A549 (cell line): ENCODE measurements at regions of chr7 and their contacts with region 1.

Region 1: GRCh38 chr7:2680792-2681490 is 7.1 kb upstream of the AMZ1 start:
- DNase-seq: peak; percentile 77 to 93
- ATAC-seq: peak; percentile 82 to 94
- H3K4me3 ChIP-seq: no peak overlapping the region
- H3K27ac ChIP-seq: no peak overlapping the region
- H3K4me1 ChIP-seq: no peaks in the 10 kb centered on the region
- CTCF ChIP-seq: peak; percentile 79
- EP300 ChIP-seq: no peak
- POLR2A ChIP-seq: no peak
- RAD21 ChIP-seq: peak; percentile 83 to 88

Region 2: DNA sequence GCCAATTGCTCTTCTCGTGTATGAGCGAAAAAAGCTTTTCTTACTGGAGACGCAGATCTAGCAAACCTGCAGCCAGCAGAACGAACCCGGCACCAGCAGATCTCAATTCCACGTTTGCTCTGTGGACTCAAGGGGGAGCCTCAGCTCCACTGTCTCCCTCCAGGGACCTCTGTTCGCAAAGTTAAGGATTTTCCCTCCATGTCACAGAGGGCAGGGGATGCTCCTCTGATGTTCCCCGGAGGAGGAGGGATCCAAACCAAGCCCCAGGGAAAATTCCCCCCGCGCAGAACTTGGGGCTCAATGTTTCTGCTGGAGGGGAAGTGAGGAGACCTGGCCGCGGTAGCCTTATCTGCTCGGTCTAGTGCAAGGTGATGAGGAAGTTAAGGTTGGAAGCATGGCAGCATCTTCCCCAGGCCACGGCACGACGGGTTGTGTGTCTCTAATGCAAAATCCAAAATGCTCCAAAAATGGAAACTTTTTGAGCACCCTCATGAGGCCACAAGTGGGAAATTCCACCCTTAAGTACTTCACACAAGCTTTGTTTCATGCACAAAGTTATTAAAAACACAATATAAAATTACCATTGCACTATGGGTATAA is 113.2 kb before region 1 on chr7:
- CTCF ChIA-PET with region 1: interaction called, 11 read pairs
- POLR2A ChIA-PET with region 1: no interaction called
- DNase-seq: no peak
- ATAC-seq: peak; percentile 45 to 78; a peak in 3 of 6 replicates
- H3K4me3 ChIP-seq: no peak overlapping the region
- H3K27ac ChIP-seq: no peak overlapping the region
- H3K4me1 ChIP-seq: peaks cover 13% of the 10 kb centered on the region
- CTCF ChIP-seq: peak; percentile 17; the same call in 2 of the 3 replicates
- EP300 ChIP-seq: no peak
- POLR2A ChIP-seq: no peak
- RAD21 ChIP-seq: peak; percentile 43 to 67; a peak in 4 of 5 replicates

Region 3: DNA sequence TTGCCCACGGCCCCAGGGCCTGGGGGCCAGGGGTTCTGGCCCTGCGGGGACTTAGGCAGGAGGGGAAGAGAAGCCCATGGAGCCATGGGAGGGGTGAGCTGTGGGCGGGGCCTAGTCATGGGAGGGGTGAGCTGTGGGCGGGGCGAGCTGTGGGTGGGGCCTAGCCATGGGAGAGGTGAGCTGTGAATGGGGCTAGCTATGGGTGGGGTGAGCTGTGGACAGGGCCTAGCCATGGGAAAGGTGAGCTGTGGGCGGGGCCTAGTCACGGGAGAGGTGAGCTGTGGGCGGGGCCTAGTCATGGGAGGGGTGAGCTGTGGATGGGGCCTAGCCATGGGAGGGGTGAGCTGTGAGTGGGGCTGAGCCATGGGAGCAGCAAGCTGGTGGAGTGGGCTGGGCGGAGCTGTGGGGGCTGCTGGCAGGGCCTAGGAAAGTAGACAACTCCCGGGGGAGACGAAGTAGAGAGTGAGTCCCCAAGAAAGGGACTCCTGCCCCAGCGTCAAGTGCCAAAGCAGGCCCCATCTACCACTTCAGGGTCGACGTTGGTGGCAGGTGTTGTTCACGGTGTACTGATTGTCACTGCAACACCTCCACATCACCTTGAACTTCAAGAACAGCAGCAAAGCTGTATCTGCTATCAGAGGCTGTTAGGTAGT is 68.4 kb before region 1 on chr7:
- CTCF ChIA-PET with region 1: interaction called, 12 read pairs
- POLR2A ChIA-PET with region 1: no interaction called
- DNase-seq: no peak
- ATAC-seq: peak in 1 of 2 experiments; percentile 58; a peak in 3 of 6 replicates
- H3K4me3 ChIP-seq: no peak overlapping the region
- H3K27ac ChIP-seq: no peak overlapping the region
- H3K4me1 ChIP-seq: no peaks in the 10 kb centered on the region
- CTCF ChIP-seq: no peak
- EP300 ChIP-seq: no peak
- POLR2A ChIP-seq: no peak
- RAD21 ChIP-seq: no peak

Region 4: DNA sequence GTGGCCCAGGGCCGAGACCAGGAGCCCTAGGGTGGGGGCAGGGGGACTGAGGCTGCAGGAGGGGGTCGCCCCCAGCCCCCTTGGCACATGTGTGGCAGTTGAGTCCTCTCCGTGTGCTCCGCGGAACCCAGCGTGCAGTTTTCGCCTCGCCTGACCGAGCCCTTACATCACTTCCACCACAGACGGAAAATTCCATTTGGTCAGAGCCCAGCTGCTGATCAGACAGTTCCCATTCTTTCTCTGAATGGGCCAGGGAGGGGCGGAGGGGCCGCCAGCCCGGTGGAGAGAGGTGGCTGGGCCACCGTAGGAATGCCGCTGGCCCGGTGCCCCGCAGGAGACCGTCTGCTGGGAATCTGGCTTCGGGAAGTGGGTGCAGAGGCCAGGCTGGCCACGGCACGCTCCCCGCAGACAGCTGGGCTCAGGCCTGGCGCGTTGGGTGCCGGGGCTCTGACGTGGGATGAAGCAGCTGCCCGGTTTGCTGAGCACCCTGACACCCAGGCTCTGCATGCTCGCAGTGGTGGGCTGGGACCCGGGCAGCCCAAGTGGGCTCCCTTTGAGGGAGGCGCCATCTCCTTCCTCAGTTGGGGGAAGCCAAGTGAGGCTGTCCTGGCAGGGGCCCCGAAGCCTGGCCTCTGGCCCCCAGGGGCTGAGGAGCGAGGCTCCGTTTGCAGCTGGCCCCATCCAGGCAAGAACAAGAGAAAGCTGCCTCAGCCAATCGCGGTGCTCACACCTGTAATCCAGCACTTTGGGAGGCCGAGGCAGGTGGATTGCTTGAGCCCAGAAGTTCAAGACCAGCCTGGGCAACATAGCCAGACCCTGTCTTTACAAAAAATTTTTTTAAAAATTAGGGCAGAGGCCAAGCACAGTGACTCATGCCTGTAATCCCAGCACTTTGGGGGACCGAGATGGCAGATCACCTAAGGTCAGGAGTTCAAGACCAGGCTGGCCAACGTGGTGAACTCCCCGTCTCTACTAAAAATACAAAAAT is 39.2 kb before region 1 on chr7:
- CTCF ChIA-PET with region 1: interaction called, 13 read pairs
- POLR2A ChIA-PET with region 1: no interaction called
- DNase-seq: no peak
- ATAC-seq: peak in 1 of 2 experiments; percentile 5; a peak in 2 of 6 replicates
- H3K4me3 ChIP-seq: no peak overlapping the region
- H3K27ac ChIP-seq: peak overlapping the region in 1 of 2 experiments; percentile 65; a peak in 2 of 6 replicates
- H3K4me1 ChIP-seq: peaks cover 32% of the 10 kb centered on the region
- CTCF ChIP-seq: no peak
- EP300 ChIP-seq: no peak
- POLR2A ChIP-seq: no peak
- RAD21 ChIP-seq: no peak

Region 5: GRCh38 chr7:2698581-2699288 is 17.8 kb after region 1 on chr7:
- CTCF ChIA-PET with region 1: interaction called, 41 read pairs
- POLR2A ChIA-PET with region 1: no interaction called
- DNase-seq: no peak
- ATAC-seq: no peak
- H3K4me3 ChIP-seq: no peak overlapping the region
- H3K27ac ChIP-seq: no peak overlapping the region
- H3K4me1 ChIP-seq: no peaks in the 10 kb centered on the region
- CTCF ChIP-seq: no peak
- EP300 ChIP-seq: no peak
- POLR2A ChIP-seq: no peak
- RAD21 ChIP-seq: no peak

Region 6: GRCh38 chr7:2734751-2735571 is 54.0 kb after region 1 on chr7:
- CTCF ChIA-PET with region 1: no interaction called
- POLR2A ChIA-PET with region 1: no interaction called
- DNase-seq: no peak
- ATAC-seq: no peak; a peak in 1 of 6 replicates
- H3K4me3 ChIP-seq: no peak overlapping the region
- H3K27ac ChIP-seq: no peak overlapping the region
- H3K4me1 ChIP-seq: no peaks in the 10 kb centered on the region
- CTCF ChIP-seq: no peak
- EP300 ChIP-seq: no peak
- POLR2A ChIP-seq: no peak
- RAD21 ChIP-seq: no peak